IMR-90 (cell line): ENCODE measurements at regions of chr9 and their contacts with region 1.

Region 1: GRCh38 chr9:129495534-129496325 is 125.2 kb downstream of the C9orf50 start:
- DNase-seq: peak; percentile 84
- ATAC-seq: peak; percentile 75
- H3K4me3 ChIP-seq: peak overlapping the region; percentile 22
- H3K27ac ChIP-seq: peak overlapping the region; percentile 99
- H3K4me1 ChIP-seq: peaks cover 49% of the 10 kb centered on the region
- H3K27me3 ChIP-seq: no peaks in the 10 kb centered on the region
- CTCF ChIP-seq: no peak
- POLR2A ChIP-seq: no peak
- RAD21 ChIP-seq: no peak; the same call in 1 of the 2 replicates

Region 2: DNA sequence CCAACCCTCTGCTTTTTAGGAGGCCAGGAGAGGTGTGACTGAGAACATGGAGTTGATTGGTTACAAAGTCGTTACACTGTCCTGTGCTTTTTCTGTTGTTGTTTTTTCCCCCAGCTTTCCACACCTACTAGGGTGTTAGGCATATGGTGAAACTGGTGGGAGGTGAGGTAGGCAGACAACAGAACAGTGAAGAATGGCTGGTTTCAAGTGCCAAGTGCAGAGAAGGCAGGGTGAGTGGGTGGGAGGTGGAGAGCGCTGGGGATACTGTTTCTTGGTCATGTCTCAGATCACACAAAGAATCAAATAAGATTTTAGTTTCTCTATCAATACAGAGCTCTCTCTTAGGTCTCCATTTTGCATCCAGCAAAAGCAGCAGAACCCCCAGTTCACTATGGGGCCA is 945.5 kb before region 1 on chr9:
- CTCF ChIA-PET with region 1: no interaction called
- POLR2A ChIA-PET with region 1: no interaction called
- dilution Hi-C with region 1: no loop called
- in situ Hi-C with region 1: no loop called
- intact Hi-C with region 1: no loop called
- DNase-seq: no peak
- ATAC-seq: no peak
- H3K4me3 ChIP-seq: no peak overlapping the region
- H3K27ac ChIP-seq: no peak overlapping the region
- H3K4me1 ChIP-seq: peaks cover 13% of the 10 kb centered on the region
- H3K27me3 ChIP-seq: no peaks in the 10 kb centered on the region
- CTCF ChIP-seq: no peak
- POLR2A ChIP-seq: no peak
- RAD21 ChIP-seq: no peak

Region 3: DNA sequence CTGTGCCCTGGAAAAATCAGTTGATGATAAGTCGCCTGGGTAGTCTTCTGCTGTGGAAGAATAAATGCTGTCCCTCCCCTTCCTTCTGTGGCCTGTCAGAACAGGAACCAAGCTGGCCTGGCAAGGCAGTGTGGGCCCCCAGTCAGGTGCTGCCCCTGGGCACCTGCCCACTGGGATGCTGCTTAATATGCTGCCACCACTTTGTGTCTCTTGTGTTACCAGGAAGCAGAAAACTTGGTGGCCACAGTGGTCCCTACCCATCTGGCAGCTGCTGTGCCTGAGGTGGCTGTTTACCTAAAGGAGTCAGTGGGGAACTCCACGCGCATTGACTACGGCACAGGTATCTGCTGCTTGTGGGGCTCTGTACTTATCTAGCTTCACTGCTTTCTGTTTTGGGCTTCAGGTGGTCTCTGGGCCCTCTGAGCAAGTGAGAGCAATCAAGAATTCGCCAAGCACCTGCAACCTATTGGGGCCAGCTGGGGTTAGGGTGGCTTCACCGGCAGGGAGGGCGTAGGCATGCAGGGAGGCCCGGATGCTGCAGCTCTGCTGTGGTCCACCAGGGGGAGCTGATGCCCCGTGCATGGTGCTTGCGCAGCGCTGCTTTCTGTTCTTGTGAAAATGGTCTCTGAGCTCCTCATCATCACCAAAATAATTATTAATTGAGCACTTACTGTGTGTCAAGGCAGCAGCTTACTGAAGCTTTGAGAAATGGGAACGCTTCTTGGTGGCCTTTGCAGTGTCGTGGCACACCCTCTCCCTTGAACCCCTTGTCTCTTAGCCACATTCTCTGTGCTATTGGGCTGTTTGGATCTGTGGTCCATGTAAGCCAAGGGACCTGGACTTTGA is 364.2 kb before region 1 on chr9:
- CTCF ChIA-PET with region 1: no interaction called
- POLR2A ChIA-PET with region 1: interaction called, 21 read pairs
- dilution Hi-C with region 1: no loop called
- in situ Hi-C with region 1: no loop called
- intact Hi-C with region 1: no loop called
- DNase-seq: peak; percentile 55
- ATAC-seq: peak; percentile 98
- H3K4me3 ChIP-seq: no peak overlapping the region
- H3K27ac ChIP-seq: no peak overlapping the region
- H3K4me1 ChIP-seq: no peaks in the 10 kb centered on the region
- H3K27me3 ChIP-seq: no peaks in the 10 kb centered on the region
- CTCF ChIP-seq: peak; percentile 98
- POLR2A ChIP-seq: 0 out of 2 replicates have a peak, but pooled peaks have one; percentile 38
- RAD21 ChIP-seq: peak; percentile 98

Region 4: GRCh38 chr9:129542741-129543140 is 47.0 kb after region 1 on chr9:
- CTCF ChIA-PET with region 1: no interaction called
- POLR2A ChIA-PET with region 1: interaction called, 10 read pairs
- dilution Hi-C with region 1: no loop called
- in situ Hi-C with region 1: no loop called
- intact Hi-C with region 1: no loop called
- DNase-seq: no peak
- ATAC-seq: no peak
- H3K4me3 ChIP-seq: no peak overlapping the region
- H3K27ac ChIP-seq: no peak overlapping the region
- H3K4me1 ChIP-seq: peaks cover 4% of the 10 kb centered on the region
- H3K27me3 ChIP-seq: no peaks in the 10 kb centered on the region
- CTCF ChIP-seq: no peak
- POLR2A ChIP-seq: no peak
- RAD21 ChIP-seq: no peak

Region 5: GRCh38 chr9:129586685-129587084 is 91.0 kb after region 1 on chr9:
- CTCF ChIA-PET with region 1: no interaction called
- POLR2A ChIA-PET with region 1: interaction called, 15 read pairs
- dilution Hi-C with region 1: no loop called
- in situ Hi-C with region 1: no loop called
- intact Hi-C with region 1: no loop called
- DNase-seq: no peak
- ATAC-seq: peak; percentile 59
- H3K4me3 ChIP-seq: no peak overlapping the region
- H3K27ac ChIP-seq: no peak overlapping the region
- H3K4me1 ChIP-seq: peaks cover 13% of the 10 kb centered on the region
- H3K27me3 ChIP-seq: no peaks in the 10 kb centered on the region
- CTCF ChIP-seq: no peak
- POLR2A ChIP-seq: no peak
- RAD21 ChIP-seq: no peak

Region 6: DNA sequence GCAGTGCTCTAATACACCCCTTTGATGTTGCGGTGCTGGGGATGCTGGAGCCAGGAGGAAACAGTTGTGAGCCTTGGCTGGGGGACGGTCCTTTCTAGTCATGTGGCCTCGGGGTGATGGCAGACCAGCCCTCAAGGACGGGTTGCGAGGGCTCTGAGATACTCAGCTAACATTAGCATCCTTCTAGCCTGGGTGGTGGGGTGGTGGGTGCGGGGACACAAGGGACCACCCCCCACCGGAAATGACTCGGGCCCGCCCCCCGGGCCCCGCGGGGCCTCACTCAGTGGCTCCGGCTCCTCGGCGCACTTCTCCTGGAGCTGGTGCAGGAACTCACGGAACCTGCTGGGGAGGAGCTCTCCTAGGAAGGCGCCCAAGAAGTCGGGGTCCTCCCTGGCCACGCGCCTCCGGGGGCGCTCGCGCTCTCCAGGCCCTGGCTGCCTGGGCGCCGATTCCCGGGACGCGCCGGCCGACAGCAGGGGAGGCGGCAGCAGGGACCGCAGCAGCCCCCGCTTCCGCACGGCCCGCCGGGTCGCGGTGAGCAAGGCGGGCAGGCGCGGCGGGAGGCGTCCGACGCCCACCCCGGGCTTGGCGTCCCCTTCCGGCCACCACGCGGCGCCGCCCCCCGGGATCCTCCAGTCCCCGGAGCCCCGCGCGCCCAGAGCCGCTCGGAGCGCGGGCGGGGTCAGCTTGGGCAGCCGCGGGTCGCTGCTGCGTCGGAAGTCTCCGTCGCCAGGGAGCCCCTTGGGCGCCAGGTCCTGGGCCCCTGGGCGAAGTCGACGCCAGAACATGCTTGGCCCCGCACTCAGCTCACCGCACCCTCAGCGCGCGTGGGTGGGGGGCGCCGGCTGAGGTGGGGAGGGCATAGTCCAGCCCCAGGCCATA is 124.3 kb after region 1 on chr9:
- CTCF ChIA-PET with region 1: no interaction called
- POLR2A ChIA-PET with region 1: no interaction called
- dilution Hi-C with region 1: no loop called
- in situ Hi-C with region 1: no loop called
- intact Hi-C with region 1: no loop called
- DNase-seq: peak; percentile 34
- ATAC-seq: peak; percentile 52
- H3K4me3 ChIP-seq: peak overlapping the region; percentile 51
- H3K27ac ChIP-seq: peak overlapping the region; percentile 22; the same call in 1 of the 2 replicates
- H3K4me1 ChIP-seq: peaks cover 13% of the 10 kb centered on the region
- H3K27me3 ChIP-seq: no peaks in the 10 kb centered on the region
- CTCF ChIP-seq: peak; percentile 41
- POLR2A ChIP-seq: peak; percentile 26; the same call in 1 of the 2 replicates
- RAD21 ChIP-seq: no peak; the same call in 1 of the 2 replicates

Region 7: GRCh38 chr9:129746092-129746777 is 250.5 kb after region 1 on chr9:
- CTCF ChIA-PET with region 1: no interaction called
- POLR2A ChIA-PET with region 1: interaction called, 32 read pairs
- dilution Hi-C with region 1: no loop called
- in situ Hi-C with region 1: no loop called
- intact Hi-C with region 1: no loop called
- DNase-seq: no peak
- ATAC-seq: no peak
- H3K4me3 ChIP-seq: no peak overlapping the region
- H3K27ac ChIP-seq: no peak overlapping the region
- H3K4me1 ChIP-seq: peaks cover 10% of the 10 kb centered on the region
- H3K27me3 ChIP-seq: no peaks in the 10 kb centered on the region
- CTCF ChIP-seq: no peak
- POLR2A ChIP-seq: no peak
- RAD21 ChIP-seq: no peak